ENCODE measurements at regions of chr2 and their contacts with region 1.

Region 1: GRCh38 chr2:241867776-241868420 is 1.6 kb upstream of the RTP5 start:
- DNase-seq: peak in 34 of 35 experiments; percentile 39 to 83 (median 68)
- ATAC-seq: peak; percentile 52 to 80 (median 60)
- H3K4me3 ChIP-seq: peak overlapping the region in 1 of 2 donors; percentile 31
- H3K4me3 Mint-ChIP-seq: peak overlapping the region; percentile 49 to 84 (median 51)
- H3K27ac ChIP-seq: peak overlapping the region; percentile 86
- H3K27ac Mint-ChIP-seq: peak overlapping the region; percentile 16 to 77
- H3K4me1 ChIP-seq: peaks cover 12 to 100% of the 10 kb centered on the region in 2 experiments
- H3K4me1 Mint-ChIP-seq: peaks cover 41 to 69% (median 56%) of the 10 kb centered on the region in 3 donors
- H3K27me3 ChIP-seq: peaks cover 0 to 23% of the 10 kb centered on the region in 2 experiments
- H3K27me3 Mint-ChIP-seq: peaks cover 10 to 24% of the 10 kb centered on the region in 2 donors

Region 2: DNA sequence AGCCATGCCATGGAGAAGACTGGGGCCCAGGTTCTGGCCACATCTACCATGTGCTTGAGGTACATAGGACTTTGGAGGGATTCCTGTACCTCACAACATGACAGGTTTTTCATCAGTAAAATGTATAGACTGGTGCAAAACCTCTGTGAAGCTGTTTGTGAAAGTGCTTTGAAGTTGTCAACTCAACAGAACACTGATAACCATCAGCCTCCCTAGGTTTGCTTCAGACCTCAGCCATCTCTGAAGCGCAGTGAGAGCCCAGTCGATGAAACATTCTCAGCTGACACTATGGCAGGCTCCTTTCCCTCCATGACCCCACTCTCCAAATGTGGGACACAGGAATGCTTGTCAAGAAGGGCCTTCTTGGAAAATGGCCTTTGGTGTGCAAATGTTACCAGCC is 398.2 kb before region 1 on chr2:
- CTCF ChIA-PET with region 1: interaction called in 1 of 2 experiments, 13 read pairs
- POLR2A ChIA-PET with region 1: no interaction called
- DNase-seq: no peak
- ATAC-seq: peak in 1 of 4 experiments; percentile 43
- H3K4me3 ChIP-seq: no peak overlapping the region
- H3K4me3 Mint-ChIP-seq: no peak overlapping the region
- H3K27ac ChIP-seq: no peak overlapping the region
- H3K27ac Mint-ChIP-seq: no peak overlapping the region
- H3K4me1 ChIP-seq: no peaks in the 10 kb centered on the region
- H3K4me1 Mint-ChIP-seq: peaks cover 3 to 7% (median 6%) of the 10 kb centered on the region in 3 donors
- H3K27me3 ChIP-seq: peaks cover 4 to 32% of the 10 kb centered on the region in 2 experiments
- H3K27me3 Mint-ChIP-seq: peaks cover 18 to 20% of the 10 kb centered on the region in 2 donors

Region 3: GRCh38 chr2:241762933-241763369 is 104.9 kb before region 1 on chr2:
- CTCF ChIA-PET with region 1: interaction called in 1 of 2 experiments, 10 read pairs
- POLR2A ChIA-PET with region 1: interaction called in 1 of 2 experiments, 9 read pairs
- DNase-seq: peak; percentile 33 to 87 (median 66)
- ATAC-seq: peak; percentile 71 to 91 (median 79)
- H3K4me3 ChIP-seq: peak overlapping the region in 1 of 2 donors; percentile 42
- H3K4me3 Mint-ChIP-seq: peak overlapping the region; percentile 67 to 71 (median 69)
- H3K27ac ChIP-seq: peak overlapping the region; percentile 89
- H3K27ac Mint-ChIP-seq: peak overlapping the region; percentile 86 to 88
- H3K4me1 ChIP-seq: peaks cover 0 to 63% of the 10 kb centered on the region in 2 experiments
- H3K4me1 Mint-ChIP-seq: peaks cover 16 to 35% (median 20%) of the 10 kb centered on the region in 3 donors
- H3K27me3 ChIP-seq: peaks cover 0 to 3% of the 10 kb centered on the region in 2 experiments
- H3K27me3 Mint-ChIP-seq: no peaks in the 10 kb centered on the region